Activated naive CD4-positive, alpha-beta T cell treated with anti-CD3 and anti-CD28 coated beads, Interleukin-2, amount 10 ng/mL, durations not matched to agents 7 days and 5 days (primary cell): ENCODE measurements at regions of chr12 and their contacts with region 1.

Region 1: DNA sequence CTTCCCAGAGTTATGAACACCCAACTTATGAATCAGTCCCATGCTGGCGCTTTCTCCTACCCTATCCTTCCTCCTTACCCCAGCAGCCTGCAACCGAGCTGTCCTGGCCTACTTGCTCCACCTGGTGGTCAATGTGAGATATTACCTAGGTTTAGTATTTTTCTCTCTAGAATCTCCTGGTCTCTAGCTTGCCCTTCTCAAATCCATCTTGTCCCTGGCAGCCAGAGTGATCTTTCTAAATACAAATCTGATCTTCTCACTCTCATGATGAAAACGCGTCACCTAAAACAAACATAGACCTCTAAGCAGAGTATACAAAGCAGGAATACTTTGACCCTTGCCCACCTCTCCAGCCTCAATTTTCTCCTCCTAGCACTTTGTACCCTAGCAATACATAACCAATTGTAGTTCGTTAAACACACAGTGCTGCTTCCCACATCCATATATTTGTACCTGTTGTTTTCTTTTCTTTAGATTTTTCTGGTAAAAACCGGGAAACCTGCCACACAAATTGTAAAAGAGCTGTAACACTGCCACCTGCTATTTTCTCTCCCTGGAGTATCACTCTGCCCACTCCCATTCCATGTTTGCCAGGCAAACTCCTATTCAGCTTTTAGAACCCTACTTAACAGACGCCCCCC is 20.0 kb upstream of the TCP11L2 start:
- DNase-seq: peak; percentile 66
- H3K4me3 Mint-ChIP-seq: no peak overlapping the region
- H3K27ac Mint-ChIP-seq: no peak overlapping the region
- H3K4me1 Mint-ChIP-seq: peaks cover 8% of the 10 kb centered on the region
- H3K27me3 Mint-ChIP-seq: peaks cover 20% of the 10 kb centered on the region

Region 2: GRCh38 chr12:106296193-106296877 is 13.8 kb after region 1 on chr12:
- CTCF ChIA-PET with region 1: interaction called, 26 read pairs
- DNase-seq: no peak
- H3K4me3 Mint-ChIP-seq: no peak overlapping the region
- H3K27ac Mint-ChIP-seq: no peak overlapping the region
- H3K4me1 Mint-ChIP-seq: peaks cover 30% of the 10 kb centered on the region
- H3K27me3 Mint-ChIP-seq: no peaks in the 10 kb centered on the region

Region 3: DNA sequence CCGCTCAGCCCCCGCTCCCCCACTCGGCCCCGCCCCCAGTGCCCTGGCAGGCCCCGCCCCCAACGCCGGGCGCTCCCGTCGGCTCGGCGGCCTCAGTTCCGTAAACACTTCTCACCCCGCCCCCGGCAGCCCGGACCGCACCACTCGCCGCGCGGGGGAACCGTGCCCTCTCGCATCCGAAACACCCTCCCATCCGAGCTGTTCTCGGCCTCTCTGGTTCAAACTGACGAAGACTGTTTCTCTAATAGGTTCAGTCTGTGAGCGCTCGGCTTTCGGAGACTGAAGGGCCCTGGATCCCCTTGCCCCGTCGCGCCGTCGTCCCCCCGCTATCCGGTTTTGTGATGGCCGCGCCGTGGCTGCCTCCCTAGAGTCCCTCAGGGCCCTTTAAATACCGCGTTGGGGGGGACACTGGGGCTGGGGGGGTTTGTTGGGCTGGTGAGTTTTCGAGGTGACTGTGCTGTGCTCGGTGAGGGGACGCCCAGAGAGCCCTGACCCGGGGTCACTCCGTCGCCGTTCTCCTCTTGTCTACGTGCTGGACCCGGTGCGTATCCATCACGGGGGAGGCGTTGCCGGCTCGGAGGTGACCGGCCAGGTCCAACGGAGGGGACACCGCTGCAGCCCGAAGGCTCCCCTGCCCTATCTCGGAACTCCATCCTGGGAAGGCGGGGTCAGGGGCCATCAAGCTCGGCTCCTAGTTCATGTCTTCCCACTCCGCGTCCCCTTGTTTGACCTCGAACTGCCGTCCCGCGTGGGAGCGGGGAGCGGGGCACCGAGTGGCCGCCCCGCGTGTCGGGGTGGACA is 20.0 kb after region 1 on chr12 and contains the start of gene TCP11L2:
- CTCF ChIA-PET with region 1: interaction called, 20 read pairs
- DNase-seq: peak; percentile 92
- H3K4me3 Mint-ChIP-seq: peak within 1 kb of the TSS; percentile 89
- H3K27ac Mint-ChIP-seq: peak within 1 kb of the TSS; percentile 99
- H3K4me1 Mint-ChIP-seq: peaks cover 62% of the 10 kb centered on the region
- H3K27me3 Mint-ChIP-seq: no peaks in the 10 kb centered on the region

Region 4: GRCh38 chr12:106386813-106387535 is 104.4 kb after region 1 on chr12:
- CTCF ChIA-PET with region 1: no interaction called
- DNase-seq: no peak
- H3K4me3 Mint-ChIP-seq: no peak overlapping the region
- H3K27ac Mint-ChIP-seq: no peak overlapping the region
- H3K4me1 Mint-ChIP-seq: no peaks in the 10 kb centered on the region
- H3K27me3 Mint-ChIP-seq: no peaks in the 10 kb centered on the region